ENCODE measurements at regions of chr5 and their contacts with region 1.

Region 1: GRCh38 chr5:83564069-83564749 is 92.7 kb downstream of the VCAN start:
- DNase-seq: no peak
- ATAC-seq: peak; percentile 39 to 66

Region 2: GRCh38 chr5:82312373-82312856 is 1251.8 kb before region 1 on chr5:
- intact Hi-C with region 1: loop called in 1 of 2 experiments (anchors 2 kb)
- DNase-seq: peak; percentile 69
- ATAC-seq: peak; percentile 85 to 86

Region 3: GRCh38 chr5:82635561-82636288 is 928.5 kb before region 1 on chr5:
- intact Hi-C with region 1: loop called in 1 of 2 experiments (anchors 10 kb)
- DNase-seq: no peak
- ATAC-seq: no peak

Region 4: GRCh38 chr5:83220331-83220730 is 343.9 kb before region 1 on chr5:
- intact Hi-C with region 1: no loop called
- DNase-seq: no peak
- ATAC-seq: no peak

Region 5: DNA sequence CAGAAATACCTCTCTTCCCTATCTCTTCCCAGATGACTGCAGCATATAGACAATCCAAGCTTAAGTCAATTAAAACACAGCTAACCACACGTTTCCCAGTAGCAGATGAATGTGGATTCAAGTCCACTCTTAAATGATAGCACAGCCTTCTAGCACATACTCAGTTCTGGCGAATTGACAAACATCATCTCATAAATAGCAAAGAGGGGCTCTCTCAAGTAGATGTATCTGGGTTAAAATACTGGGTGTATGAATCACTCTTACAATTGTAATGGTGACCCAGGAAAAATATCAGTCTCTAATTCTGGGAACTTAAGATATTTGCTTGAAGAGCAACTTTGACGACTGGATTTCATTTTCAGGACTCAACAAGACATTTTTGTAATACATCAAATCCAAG is 223.4 kb after region 1 on chr5:
- intact Hi-C with region 1: no loop called
- DNase-seq: no peak
- ATAC-seq: no peak

Measured in left cardiac atrium (tissue), 4 donors.